ENCODE measurements at regions of chr3 and their contacts with region 1.

Region 1: GRCh38 chr3:150787741-150788370 is 24.9 kb upstream of the SIAH2 start:
- DNase-seq: peak; percentile 58 to 64
- ATAC-seq: peak; percentile 60 to 72
- H3K4me3 ChIP-seq: no peak overlapping the region
- H3K27ac ChIP-seq: no peak overlapping the region
- H3K4me1 ChIP-seq: no peaks in the 10 kb centered on the region
- H3K27me3 ChIP-seq: no peaks in the 10 kb centered on the region
- CTCF ChIP-seq: peak; percentile 72 to 89 (median 77)
- POLR2A ChIP-seq: no peak

Region 2: DNA sequence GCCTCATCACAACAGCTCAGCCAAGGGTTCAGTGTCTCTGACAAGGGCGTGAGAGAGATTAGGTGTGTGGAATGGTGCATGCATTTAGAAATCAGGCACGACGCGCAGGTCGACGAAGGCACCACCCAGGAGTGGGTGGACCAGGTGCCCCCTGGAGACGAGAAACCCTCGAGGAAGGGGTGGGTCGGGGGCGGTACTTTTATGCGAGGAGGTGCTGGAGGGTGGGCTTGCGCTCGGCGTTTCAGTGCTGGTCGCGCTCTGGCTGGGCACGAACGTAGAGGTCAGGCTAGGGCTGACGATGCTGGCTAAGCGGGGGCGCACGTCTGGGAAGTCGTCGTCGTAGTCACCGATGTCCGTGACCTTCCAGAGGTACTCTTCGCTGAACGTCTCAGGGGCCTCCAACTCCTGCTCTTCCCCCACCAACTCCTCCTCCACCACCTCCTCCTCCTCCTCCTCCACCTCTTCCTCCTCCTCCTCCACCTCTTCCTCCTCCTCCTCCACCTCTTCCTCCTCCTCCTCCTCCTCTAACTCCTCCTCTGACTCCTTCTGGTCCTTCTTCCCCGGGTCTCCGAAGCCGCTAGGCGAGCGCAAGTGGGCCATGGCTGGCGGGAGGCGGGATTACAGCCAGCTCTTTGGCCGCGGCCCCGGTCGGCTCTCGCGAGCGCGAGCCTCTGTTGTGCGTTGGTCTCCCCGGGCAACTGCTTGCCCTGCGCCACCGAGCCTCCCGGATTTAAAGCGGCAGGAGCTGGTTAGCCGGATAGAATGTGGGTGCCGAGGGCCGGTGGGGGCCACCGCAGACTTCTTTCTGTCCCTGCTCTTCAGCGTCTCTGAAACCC is 84.3 kb before region 1 on chr3 and contains the start of gene ERICH6:
- in situ Hi-C with region 1: no loop called
- intact Hi-C with region 1: no loop called
- DNase-seq: peak; percentile 59 to 77
- ATAC-seq: peak; percentile 94 to 97
- H3K4me3 ChIP-seq: peak within 1 kb of the TSS; percentile 54 to 73 (median 66)
- H3K27ac ChIP-seq: peak within 1 kb of the TSS; percentile 23 to 64 (median 60)
- H3K4me1 ChIP-seq: peaks cover 0 to 12% of the 10 kb centered on the region in 2 donors
- H3K27me3 ChIP-seq: no peaks in the 10 kb centered on the region
- CTCF ChIP-seq: peak in 2 of 5 experiments; percentile 14 to 21
- POLR2A ChIP-seq: no peak
- total RNA-seq, gene ERICH6: not detected

Region 3: DNA sequence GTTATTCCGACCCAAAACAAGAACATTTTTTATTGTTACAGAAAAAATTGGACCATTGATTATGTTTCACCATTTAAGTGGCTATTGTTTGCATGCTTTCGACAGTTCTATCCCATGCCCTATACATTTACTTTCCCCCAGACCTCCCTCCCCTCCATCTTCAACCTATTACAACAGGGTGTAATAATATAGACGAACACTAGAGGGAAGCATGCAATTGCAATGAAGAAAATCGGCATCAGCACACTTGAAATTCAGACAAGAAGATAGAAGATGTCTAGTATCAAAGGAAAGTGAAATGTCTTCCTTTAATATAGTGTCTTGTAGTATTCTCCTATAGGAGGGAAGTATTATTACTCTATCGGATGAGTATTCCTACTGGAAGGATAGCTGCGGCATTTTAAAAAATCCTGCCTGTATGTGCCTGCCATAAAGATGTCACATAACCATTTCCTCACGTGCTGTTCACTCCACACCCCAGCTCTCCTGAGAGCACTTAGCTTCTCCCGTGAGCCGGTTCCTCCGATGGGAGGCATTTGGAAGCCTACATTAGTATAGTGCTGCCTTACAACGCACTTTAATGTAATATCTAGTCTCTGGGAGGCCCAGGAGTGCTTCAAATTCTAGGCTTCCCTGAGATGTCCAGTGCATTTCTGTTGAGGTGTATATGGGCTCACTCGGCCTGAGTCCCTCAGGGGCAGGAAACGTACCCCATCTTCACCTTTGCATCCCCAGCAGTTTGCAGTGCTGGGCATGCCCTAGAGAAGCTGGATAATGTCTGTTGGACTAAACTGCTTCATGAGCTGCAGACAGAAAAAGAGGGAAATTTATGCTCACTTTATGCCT is 66.3 kb before region 1 on chr3:
- in situ Hi-C with region 1: loop called in 2 of 4 experiments (anchors 10 kb)
- intact Hi-C with region 1: loop called (anchors 2 kb)
- DNase-seq: no peak
- ATAC-seq: peak; percentile 86 to 87
- H3K4me3 ChIP-seq: no peak overlapping the region
- H3K27ac ChIP-seq: no peak overlapping the region
- H3K4me1 ChIP-seq: no peaks in the 10 kb centered on the region
- H3K27me3 ChIP-seq: no peaks in the 10 kb centered on the region
- CTCF ChIP-seq: peak; percentile 80 to 87 (median 82)
- POLR2A ChIP-seq: no peak

Region 4: GRCh38 chr3:150825192-150825915 is 37.5 kb after region 1 on chr3:
- in situ Hi-C with region 1: no loop called
- intact Hi-C with region 1: no loop called
- DNase-seq: no peak
- ATAC-seq: no peak
- H3K4me3 ChIP-seq: no peak overlapping the region
- H3K27ac ChIP-seq: no peak overlapping the region
- H3K4me1 ChIP-seq: no peaks in the 10 kb centered on the region
- H3K27me3 ChIP-seq: peaks cover 0 to 5% (median 0%) of the 10 kb centered on the region in 3 donors
- CTCF ChIP-seq: no peak
- POLR2A ChIP-seq: no peak

Region 5: DNA sequence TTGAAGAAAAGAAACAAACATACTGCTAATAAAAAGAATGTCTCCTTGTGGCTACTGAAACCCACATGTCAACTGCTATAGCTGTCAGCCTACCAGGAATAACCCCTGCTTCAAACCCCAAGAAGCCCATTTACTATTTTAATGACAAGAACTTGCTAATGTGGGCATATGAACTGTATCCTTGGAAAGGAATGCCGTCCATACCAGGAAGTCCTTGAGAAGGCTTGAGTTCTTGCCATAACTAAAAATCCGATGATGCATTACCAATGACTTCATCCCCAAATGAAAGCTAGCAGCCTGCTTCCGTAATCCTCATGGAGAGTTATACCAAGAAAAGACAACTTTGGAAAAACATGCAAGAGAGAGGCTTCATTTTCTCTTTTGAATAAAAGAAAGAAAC is 82.5 kb after region 1 on chr3:
- in situ Hi-C with region 1: no loop called
- intact Hi-C with region 1: loop called (anchors 2 kb)
- DNase-seq: no peak
- ATAC-seq: no peak
- H3K4me3 ChIP-seq: no peak overlapping the region
- H3K27ac ChIP-seq: no peak overlapping the region
- H3K4me1 ChIP-seq: no peaks in the 10 kb centered on the region
- H3K27me3 ChIP-seq: no peaks in the 10 kb centered on the region
- CTCF ChIP-seq: no peak
- POLR2A ChIP-seq: no peak